Naive thymus-derived CD4-positive, alpha-beta T cell (primary cell): ENCODE measurements at regions of chr5 and their contacts with region 1.

Region 1: GRCh38 chr5:76521240-76521758 is 101.9 kb downstream of the F2RL2 start:
- DNase-seq: no peak
- ATAC-seq: peak; percentile 51
- H3K4me3 ChIP-seq: no peak overlapping the region
- H3K4me3 Mint-ChIP-seq: peak overlapping the region in 5 of 10 donors; percentile 27 to 70 (median 35)
- H3K27ac ChIP-seq: no peak overlapping the region
- H3K27ac Mint-ChIP-seq: peak overlapping the region in 6 of 9 donors; percentile 6 to 78 (median 32)
- H3K4me1 ChIP-seq: peaks cover 0 to 7% of the 10 kb centered on the region in 2 donors
- H3K4me1 Mint-ChIP-seq: peaks cover 43 to 73% (median 55%) of the 10 kb centered on the region in 7 donors
- H3K27me3 ChIP-seq: no peaks in the 10 kb centered on the region
- H3K27me3 Mint-ChIP-seq: no peaks in the 10 kb centered on the region

Region 2: GRCh38 chr5:75660678-75661465 is 860.4 kb before region 1 on chr5:
- CTCF ChIA-PET with region 1: no interaction called
- POLR2A ChIA-PET with region 1: no interaction called
- intact Hi-C with region 1: loop called in 1 of 2 experiments (anchors 5 kb)
- DNase-seq: no peak
- ATAC-seq: peak; percentile 69
- H3K4me3 ChIP-seq: no peak overlapping the region
- H3K4me3 Mint-ChIP-seq: no peak overlapping the region
- H3K27ac ChIP-seq: no peak overlapping the region
- H3K27ac Mint-ChIP-seq: no peak overlapping the region
- H3K4me1 ChIP-seq: no peaks in the 10 kb centered on the region
- H3K4me1 Mint-ChIP-seq: peaks cover 0 to 5% (median 0%) of the 10 kb centered on the region in 7 donors
- H3K27me3 ChIP-seq: no peaks in the 10 kb centered on the region
- H3K27me3 Mint-ChIP-seq: peaks cover 0 to 3% (median 0%) of the 10 kb centered on the region in 5 donors

Region 3: DNA sequence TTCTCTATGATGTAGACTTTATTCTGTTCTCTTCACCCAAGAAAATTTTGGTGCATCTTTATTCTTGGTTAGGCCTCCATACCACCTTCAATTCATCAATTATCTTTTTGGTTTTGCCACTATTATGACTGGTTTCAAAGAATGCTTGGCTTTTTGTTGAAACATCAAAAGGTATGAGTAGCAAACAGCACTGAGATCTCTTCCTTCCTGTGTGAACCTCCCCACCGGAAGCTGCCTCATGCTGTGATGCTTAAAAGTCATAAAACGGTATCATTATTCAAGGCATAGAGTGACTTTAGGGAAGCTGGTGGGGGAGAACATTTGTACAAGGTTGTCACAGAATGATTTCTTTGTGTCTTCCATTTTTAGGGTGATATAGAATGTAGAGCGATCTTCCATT is 47.6 kb before region 1 on chr5:
- CTCF ChIA-PET with region 1: no interaction called
- POLR2A ChIA-PET with region 1: no interaction called
- intact Hi-C with region 1: loop called in 1 of 2 experiments (anchors 5 kb)
- DNase-seq: peak; percentile 13 to 89 (median 83)
- ATAC-seq: peak; percentile 95
- H3K4me3 ChIP-seq: no peak overlapping the region
- H3K4me3 Mint-ChIP-seq: peak overlapping the region; percentile 19 to 78 (median 58)
- H3K27ac ChIP-seq: peak overlapping the region; percentile 59
- H3K27ac Mint-ChIP-seq: peak overlapping the region; percentile 72 to 98 (median 93)
- H3K4me1 ChIP-seq: peaks cover 54 to 67% of the 10 kb centered on the region in 2 donors
- H3K4me1 Mint-ChIP-seq: peaks cover 56 to 88% (median 79%) of the 10 kb centered on the region in 7 donors
- H3K27me3 ChIP-seq: no peaks in the 10 kb centered on the region
- H3K27me3 Mint-ChIP-seq: no peaks in the 10 kb centered on the region